ENCODE measurements at regions of chr15 and their contacts with region 1.

Region 1: GRCh38 chr15:36501063-36501678 is 78.3 kb upstream of the CDIN1 start:
- DNase-seq: peak; percentile 19
- ATAC-seq: peak; percentile 99
- H3K4me3 ChIP-seq: no peak overlapping the region
- H3K27ac ChIP-seq: no peak overlapping the region
- H3K4me1 ChIP-seq: no peaks in the 10 kb centered on the region
- H3K27me3 ChIP-seq: no peaks in the 10 kb centered on the region
- CTCF ChIP-seq: peak; percentile 84 to 95 (median 88)
- EP300 ChIP-seq: no peak
- POLR2A ChIP-seq: no peak
- RAD21 ChIP-seq: peak; percentile 96

Region 2: GRCh38 chr15:35519541-35520149 is 981.5 kb before region 1 on chr15:
- CTCF ChIA-PET with region 1: interaction called, 7 read pairs
- POLR2A ChIA-PET with region 1: no interaction called
- RAD21 ChIA-PET with region 1: no interaction called
- SMC1A ChIA-PET with region 1: no interaction called
- in situ Hi-C with region 1: no loop called
- intact Hi-C with region 1: loop called (anchors 10 kb)
- DNase-seq: peak; percentile 19
- ATAC-seq: peak; percentile 79
- H3K4me3 ChIP-seq: no peak overlapping the region
- H3K27ac ChIP-seq: no peak overlapping the region
- H3K4me1 ChIP-seq: no peaks in the 10 kb centered on the region
- H3K27me3 ChIP-seq: no peaks in the 10 kb centered on the region
- CTCF ChIP-seq: peak; percentile 41 to 71 (median 62); a peak in 5 of 6 replicates
- EP300 ChIP-seq: no peak
- POLR2A ChIP-seq: no peak
- RAD21 ChIP-seq: peak; percentile 88

Region 3: DNA sequence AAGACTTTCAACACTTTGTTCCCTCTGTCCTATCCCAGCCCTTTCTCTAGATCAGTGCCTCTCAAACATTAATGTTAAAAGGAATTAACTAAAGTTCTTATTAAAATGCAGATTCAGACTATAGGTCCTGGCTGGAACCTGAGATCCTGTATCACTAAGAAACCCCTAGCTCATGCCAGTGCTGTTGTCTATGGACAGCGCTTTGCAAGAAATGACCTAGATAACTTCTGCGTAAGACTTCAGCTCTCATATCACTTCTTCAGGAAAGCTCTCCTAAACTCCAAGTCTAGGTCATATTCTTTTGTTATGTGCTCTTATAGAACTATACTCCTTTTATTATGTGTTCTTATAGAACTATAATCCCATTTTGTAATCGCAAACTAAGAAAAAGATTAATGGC is 10.4 kb after region 1 on chr15:
- CTCF ChIA-PET with region 1: interaction called, 23 read pairs
- POLR2A ChIA-PET with region 1: no interaction called
- RAD21 ChIA-PET with region 1: interaction called, 3 read pairs
- SMC1A ChIA-PET with region 1: interaction called, 7 read pairs
- in situ Hi-C with region 1: no loop called
- intact Hi-C with region 1: no loop called
- DNase-seq: no peak
- ATAC-seq: no peak
- H3K4me3 ChIP-seq: no peak overlapping the region
- H3K27ac ChIP-seq: no peak overlapping the region
- H3K4me1 ChIP-seq: no peaks in the 10 kb centered on the region
- H3K27me3 ChIP-seq: no peaks in the 10 kb centered on the region; a peak in 1 of 4 replicates
- CTCF ChIP-seq: no peak
- EP300 ChIP-seq: no peak
- POLR2A ChIP-seq: no peak
- RAD21 ChIP-seq: no peak

Region 4: DNA sequence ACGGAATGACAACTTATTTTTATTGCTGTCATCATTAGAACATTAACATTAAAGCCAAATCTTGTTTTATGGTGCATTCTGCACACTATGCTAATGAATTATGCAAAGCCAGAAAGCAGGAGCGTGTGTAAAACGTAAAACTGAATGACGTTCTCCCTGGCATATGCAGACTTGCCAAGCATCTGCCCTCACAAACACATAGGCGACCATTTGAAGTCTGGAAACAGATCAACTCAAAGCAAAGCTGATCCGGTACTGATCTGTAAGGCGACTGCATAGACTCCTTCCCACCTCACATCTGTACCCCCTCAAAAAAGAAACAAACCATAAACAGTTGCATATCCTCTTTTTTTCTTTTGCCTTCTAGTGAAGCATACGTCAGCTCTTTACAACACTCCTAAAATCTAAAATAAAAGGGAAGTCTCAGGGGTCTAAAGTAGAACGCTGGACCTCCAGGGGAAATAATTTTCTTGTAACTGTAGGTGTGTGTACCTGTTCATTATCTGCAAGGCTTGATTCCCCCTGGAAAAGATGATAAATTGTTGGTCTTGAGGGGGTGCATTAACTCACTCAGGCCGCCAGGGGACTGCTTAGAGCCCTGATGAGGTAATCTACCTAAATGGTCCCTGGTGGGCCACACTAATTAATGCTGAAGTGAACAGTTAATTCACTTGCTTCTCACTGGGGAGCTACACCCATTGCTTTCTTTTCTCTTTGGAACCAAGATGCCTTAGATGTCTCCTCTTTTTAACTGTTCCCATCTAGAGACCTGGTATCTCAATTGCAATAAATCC is 309.7 kb after region 1 on chr15:
- CTCF ChIA-PET with region 1: interaction called, 5 read pairs
- POLR2A ChIA-PET with region 1: no interaction called
- RAD21 ChIA-PET with region 1: interaction called, 3 read pairs
- SMC1A ChIA-PET with region 1: no interaction called
- in situ Hi-C with region 1: no loop called
- intact Hi-C with region 1: loop called (anchors 5 kb)
- DNase-seq: no peak
- ATAC-seq: peak; percentile 84
- H3K4me3 ChIP-seq: no peak overlapping the region
- H3K27ac ChIP-seq: no peak overlapping the region
- H3K4me1 ChIP-seq: no peaks in the 10 kb centered on the region
- H3K27me3 ChIP-seq: no peaks in the 10 kb centered on the region
- CTCF ChIP-seq: peak; percentile 44 to 73 (median 62)
- EP300 ChIP-seq: no peak
- POLR2A ChIP-seq: no peak
- RAD21 ChIP-seq: peak; percentile 41

Region 5: GRCh38 chr15:36883713-36884517 is 382.7 kb after region 1 on chr15:
- CTCF ChIA-PET with region 1: interaction called, 12 read pairs
- POLR2A ChIA-PET with region 1: no interaction called
- RAD21 ChIA-PET with region 1: interaction called, 9 read pairs
- SMC1A ChIA-PET with region 1: interaction called, 19 read pairs
- in situ Hi-C with region 1: no loop called
- intact Hi-C with region 1: loop called (anchors 2 kb)
- DNase-seq: peak; percentile 26
- ATAC-seq: peak; percentile 93
- H3K4me3 ChIP-seq: no peak overlapping the region
- H3K27ac ChIP-seq: no peak overlapping the region
- H3K4me1 ChIP-seq: no peaks in the 10 kb centered on the region; the same call in 1 of the 2 replicates
- H3K27me3 ChIP-seq: peaks cover 12 to 50% of the 10 kb centered on the region in 2 experiments
- CTCF ChIP-seq: peak; percentile 75 to 93 (median 77)
- EP300 ChIP-seq: no peak
- POLR2A ChIP-seq: no peak
- RAD21 ChIP-seq: peak; percentile 93

Region 6: GRCh38 chr15:37100109-37100965 is 599.2 kb after region 1 on chr15 and contains the start of gene MEIS2:
- CTCF ChIA-PET with region 1: interaction called, 6 read pairs
- POLR2A ChIA-PET with region 1: no interaction called
- RAD21 ChIA-PET with region 1: interaction called, 3 read pairs
- SMC1A ChIA-PET with region 1: interaction called, 9 read pairs
- in situ Hi-C with region 1: loop called (anchors 10 kb)
- intact Hi-C with region 1: no loop called
- DNase-seq: peak; percentile 37
- ATAC-seq: peak; percentile 53
- H3K4me3 ChIP-seq: peak within 1 kb of the TSS; percentile 87
- H3K27ac ChIP-seq: peak within 1 kb of the TSS; percentile 88
- H3K4me1 ChIP-seq: peaks cover 7% of the 10 kb centered on the region
- H3K27me3 ChIP-seq: peaks cover 0 to 8% of the 10 kb centered on the region in 2 experiments; a peak in 2 of 4 replicates
- CTCF ChIP-seq: no peak
- EP300 ChIP-seq: no peak
- POLR2A ChIP-seq: peak; percentile 88
- RAD21 ChIP-seq: no peak
- polyA plus RNA-seq, gene MEIS2: 9.2 to 9.4 TPM

Region 7: DNA sequence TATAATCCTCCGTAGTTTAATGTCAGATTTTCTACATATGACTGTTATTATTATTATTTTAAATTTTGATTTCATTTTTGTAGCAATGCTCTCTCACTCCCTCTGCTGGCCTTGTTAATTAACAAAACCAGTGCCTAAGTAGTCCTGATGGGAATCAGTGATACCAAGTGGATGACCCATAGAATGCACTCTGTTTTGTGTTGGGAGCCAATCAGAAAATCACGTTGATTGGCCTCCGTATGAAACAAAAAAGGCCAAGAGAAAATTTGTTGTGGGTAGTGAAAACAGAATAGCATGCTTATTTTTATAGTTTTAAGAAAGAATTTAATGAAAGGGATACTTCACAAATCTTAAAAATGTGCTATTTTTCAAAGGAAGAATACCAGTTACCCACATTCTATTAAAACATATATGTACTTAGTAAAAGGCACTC is 633.5 kb after region 1 on chr15:
- CTCF ChIA-PET with region 1: interaction called, 3 read pairs
- POLR2A ChIA-PET with region 1: no interaction called
- RAD21 ChIA-PET with region 1: no interaction called
- SMC1A ChIA-PET with region 1: interaction called, 5 read pairs
- in situ Hi-C with region 1: no loop called
- intact Hi-C with region 1: loop called (anchors 2 kb)
- DNase-seq: no peak
- ATAC-seq: peak; percentile 80
- H3K4me3 ChIP-seq: no peak overlapping the region
- H3K27ac ChIP-seq: no peak overlapping the region
- H3K4me1 ChIP-seq: peaks cover 4% of the 10 kb centered on the region; the same call in 1 of the 2 replicates
- H3K27me3 ChIP-seq: peaks cover 0 to 2% of the 10 kb centered on the region in 2 experiments; a peak in 2 of 4 replicates
- CTCF ChIP-seq: peak; percentile 53 to 60 (median 55); a peak in 5 of 6 replicates
- EP300 ChIP-seq: no peak
- POLR2A ChIP-seq: no peak
- RAD21 ChIP-seq: peak; percentile 34